HCT116 (cell line): ENCODE measurements at regions of chr3 and their contacts with region 1.

Region 1: GRCh38 chr3:188037216-188037718 is 116.7 kb upstream of the LPP start:
- DNase-seq: peak; percentile 28
- ATAC-seq: peak; percentile 91
- H3K4me3 ChIP-seq: no peak overlapping the region
- H3K27ac ChIP-seq: no peak overlapping the region
- H3K4me1 ChIP-seq: peaks cover 2 to 16% of the 10 kb centered on the region in 2 experiments; a peak in 3 of 4 replicates
- H3K27me3 ChIP-seq: no peaks in the 10 kb centered on the region
- CTCF ChIP-seq: peak; percentile 50 to 66 (median 53); a peak in 5 of 6 replicates
- POLR2A ChIP-seq: no peak
- RAD21 ChIP-seq: peak; percentile 80

Region 2: DNA sequence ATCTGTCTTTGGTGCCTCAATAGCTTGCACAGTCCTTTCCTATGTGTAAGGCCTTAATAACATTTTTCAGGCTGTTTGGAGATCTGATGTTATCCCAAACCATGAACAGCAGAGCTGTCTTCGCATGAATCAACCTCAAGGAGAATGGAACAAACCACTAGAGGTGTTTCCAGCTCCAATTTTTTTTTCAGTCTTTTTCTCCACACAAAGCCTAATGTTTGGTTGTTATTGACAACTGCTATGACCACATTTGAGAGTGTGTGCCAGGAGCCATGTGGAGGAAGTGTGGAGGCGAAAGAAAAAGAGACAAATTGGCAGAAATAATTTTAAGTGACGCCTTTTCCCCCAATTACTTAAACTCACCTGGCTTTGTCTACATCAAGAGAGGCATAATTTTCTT is 630.3 kb before region 1 on chr3:
- CTCF ChIA-PET with region 1: no interaction called
- POLR2A ChIA-PET with region 1: no interaction called
- RAD21 ChIA-PET with region 1: no interaction called
- intact Hi-C with region 1: no loop called
- DNase-seq: no peak
- ATAC-seq: no peak
- H3K4me3 ChIP-seq: no peak overlapping the region
- H3K27ac ChIP-seq: no peak overlapping the region
- H3K4me1 ChIP-seq: peaks cover 15 to 19% of the 10 kb centered on the region in 2 experiments
- H3K27me3 ChIP-seq: no peaks in the 10 kb centered on the region
- CTCF ChIP-seq: no peak
- POLR2A ChIP-seq: no peak
- RAD21 ChIP-seq: no peak

Region 3: DNA sequence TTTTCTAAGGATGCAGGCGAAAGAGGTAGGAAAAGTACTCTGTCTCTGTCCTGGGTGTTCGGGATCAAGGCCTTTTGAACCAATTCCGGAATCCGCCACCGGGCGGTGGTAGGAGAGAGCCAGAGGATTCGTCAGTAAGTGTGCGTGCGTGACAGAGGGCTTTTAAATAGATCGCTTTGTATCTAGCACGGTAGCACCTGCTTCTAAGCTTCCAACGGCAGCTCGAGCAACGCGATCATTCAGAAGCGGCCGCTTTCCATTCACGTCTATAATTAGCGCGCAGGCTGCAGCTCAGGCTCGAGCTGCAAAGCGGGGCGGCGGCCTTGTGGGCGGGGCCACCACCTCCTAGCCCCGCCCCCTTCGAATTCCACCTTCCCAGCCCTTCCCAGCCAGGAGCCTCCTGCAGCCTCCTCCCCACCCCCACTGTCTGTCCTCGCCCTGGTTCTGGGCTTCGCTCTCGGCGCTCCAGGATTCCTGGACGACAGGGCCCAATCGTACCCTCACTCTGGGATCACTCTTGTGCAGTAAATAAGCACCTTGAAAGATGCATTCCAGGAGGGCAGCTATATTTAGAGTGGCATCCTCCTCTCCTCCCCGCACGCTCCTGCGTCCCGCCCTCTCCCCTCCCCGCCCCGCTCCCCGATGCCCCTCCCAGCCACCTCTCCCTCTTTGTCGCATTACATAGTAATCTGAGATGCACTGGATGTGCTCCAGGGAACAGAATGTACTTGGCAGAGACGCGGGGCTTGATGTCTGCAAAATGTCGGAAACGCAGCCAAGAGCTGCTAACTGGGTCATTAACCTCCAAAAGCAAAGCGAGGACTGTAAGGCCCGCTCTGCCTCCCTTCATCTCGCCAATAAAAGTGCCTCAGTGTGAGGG is 910.4 kb after region 1 on chr3:
- CTCF ChIA-PET with region 1: no interaction called
- POLR2A ChIA-PET with region 1: no interaction called
- RAD21 ChIA-PET with region 1: no interaction called
- intact Hi-C with region 1: loop called (anchors 1 kb)
- DNase-seq: peak; percentile 84
- ATAC-seq: peak; percentile 80
- H3K4me3 ChIP-seq: peak overlapping the region; percentile 44 to 56
- H3K27ac ChIP-seq: peak overlapping the region; percentile 87
- H3K4me1 ChIP-seq: peaks cover 46 to 59% of the 10 kb centered on the region in 2 experiments
- H3K27me3 ChIP-seq: no peaks in the 10 kb centered on the region
- CTCF ChIP-seq: peak in 2 of 3 experiments; percentile 47 to 56; a peak in 4 of 6 replicates
- POLR2A ChIP-seq: peak; percentile 46
- RAD21 ChIP-seq: no peak